ENCODE measurements at regions of chr1 and their contacts with region 1.

Region 1: DNA sequence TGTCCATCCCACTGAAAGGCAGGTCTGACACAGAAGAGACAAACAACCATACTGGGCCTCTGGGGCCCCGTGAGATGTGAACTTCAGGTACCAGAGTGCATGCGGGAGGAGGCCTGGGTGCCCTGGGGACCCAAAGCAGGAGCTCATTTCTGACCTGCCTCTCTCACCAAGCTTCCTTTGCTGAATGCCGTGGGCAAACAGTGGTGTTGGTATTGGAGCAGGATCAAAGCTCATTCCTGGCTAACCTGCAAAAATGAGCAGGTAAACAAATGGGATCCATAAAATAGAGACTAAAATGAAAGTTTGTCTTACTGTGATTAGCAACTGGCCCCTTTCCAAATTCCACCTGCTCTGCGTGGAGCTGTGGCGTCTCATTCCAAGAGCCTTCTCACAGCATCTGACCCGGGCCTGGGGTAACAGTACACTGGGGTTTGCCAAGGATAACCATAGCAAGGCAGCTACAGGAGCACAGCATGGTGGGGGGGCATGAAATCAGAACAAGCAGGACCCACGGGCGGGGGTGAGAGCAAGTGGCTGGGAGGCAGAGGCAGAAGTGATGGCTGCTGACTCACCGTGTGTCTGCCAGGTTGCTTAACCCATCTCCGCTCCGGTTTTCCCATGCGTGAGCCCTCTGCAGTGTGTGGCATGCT is 103.6 kb downstream of the KIF26B start:
- DNase-seq: no peak
- ATAC-seq: peak; percentile 47; the same call in 1 of the 2 replicates
- H3K4me3 ChIP-seq: no peak overlapping the region
- H3K27ac ChIP-seq: no peak overlapping the region
- H3K4me1 ChIP-seq: no peaks in the 10 kb centered on the region
- H3K27me3 ChIP-seq: peaks cover 8% of the 10 kb centered on the region
- CTCF ChIP-seq: no peak

Region 2: GRCh38 chr1:245245021-245245667 is 13.3 kb before region 1 on chr1:
- CTCF ChIA-PET with region 1: no interaction called
- POLR2A ChIA-PET with region 1: no interaction called
- in situ Hi-C with region 1: no loop called
- intact Hi-C with region 1: no loop called
- DNase-seq: no peak
- ATAC-seq: no peak
- H3K4me3 ChIP-seq: no peak overlapping the region
- H3K27ac ChIP-seq: no peak overlapping the region
- H3K4me1 ChIP-seq: no peaks in the 10 kb centered on the region
- H3K27me3 ChIP-seq: no peaks in the 10 kb centered on the region
- CTCF ChIP-seq: no peak

Region 3: GRCh38 chr1:245485996-245486395 is 227.6 kb after region 1 on chr1:
- CTCF ChIA-PET with region 1: no interaction called
- POLR2A ChIA-PET with region 1: interaction called, 12 read pairs
- in situ Hi-C with region 1: no loop called
- intact Hi-C with region 1: no loop called
- DNase-seq: no peak
- ATAC-seq: no peak
- H3K4me3 ChIP-seq: no peak overlapping the region
- H3K27ac ChIP-seq: no peak overlapping the region
- H3K4me1 ChIP-seq: no peaks in the 10 kb centered on the region
- H3K27me3 ChIP-seq: no peaks in the 10 kb centered on the region; the same call in 1 of the 2 replicates
- CTCF ChIP-seq: no peak

Measured in Panc1 (cell line).